ENCODE measurements at regions of chr4 and their contacts with region 1.

Region 1: GRCh38 chr4:2262143-2262943 is 434 bp upstream of the MXD4 start:
- DNase-seq: peak; percentile 99 to 100 (median 100)

Region 2: DNA sequence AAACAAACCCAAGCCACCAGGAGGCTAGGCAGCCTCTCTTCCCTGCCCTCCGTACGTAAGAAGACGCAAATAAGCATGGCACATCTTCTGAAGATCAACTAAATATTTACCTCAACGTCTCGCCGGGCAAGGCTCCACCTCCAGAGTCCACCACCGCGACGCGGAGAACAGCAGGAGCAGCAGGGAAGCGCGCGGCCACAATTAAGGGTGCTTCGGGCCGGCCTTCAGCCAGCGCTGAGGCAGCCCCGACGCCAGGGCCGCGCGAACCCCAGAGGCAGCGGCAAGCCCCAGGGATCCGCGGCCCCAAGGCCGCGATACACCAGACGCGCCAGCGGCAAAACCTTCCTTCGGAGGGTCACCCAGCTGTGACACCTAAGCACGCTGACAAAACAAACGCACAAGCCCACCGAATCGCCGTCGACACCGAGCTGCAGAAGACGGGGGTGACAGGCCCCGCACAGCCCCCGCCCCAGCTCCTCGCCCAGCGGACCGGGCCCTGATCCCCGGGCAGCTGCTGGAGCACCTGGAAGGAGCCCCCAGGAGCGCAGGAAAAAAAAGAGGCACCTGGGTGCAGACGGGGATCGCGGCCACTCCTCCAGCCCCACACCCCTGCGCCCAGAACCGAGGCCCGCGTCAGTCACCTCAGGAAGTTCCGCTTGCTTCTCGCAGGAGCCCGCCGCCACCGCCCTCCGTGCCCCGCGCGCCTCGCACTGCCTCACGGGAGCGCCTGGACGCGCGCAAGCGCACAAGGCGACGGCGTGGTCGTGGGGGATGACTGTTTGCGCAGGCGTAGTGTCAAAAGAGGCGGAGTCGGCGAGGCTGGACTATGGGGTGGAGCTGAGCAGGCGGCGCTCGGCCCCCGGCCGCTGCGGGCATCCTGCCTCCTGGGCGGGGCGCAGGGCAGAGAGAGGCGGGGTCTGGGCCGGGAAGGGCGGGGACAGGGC is 20.7 kb before region 1 on chr4 and contains the starts of genes HAUS3 and POLN:
- intact Hi-C with region 1: loop called (anchors 1 kb)
- DNase-seq: peak; percentile 92 to 99 (median 98)

Measured in head of caudate nucleus (tissue), 42 donors.